CD8-positive, alpha-beta T cell (primary cell): ENCODE measurements at regions of chr3 and their contacts with region 1.

Region 1: DNA sequence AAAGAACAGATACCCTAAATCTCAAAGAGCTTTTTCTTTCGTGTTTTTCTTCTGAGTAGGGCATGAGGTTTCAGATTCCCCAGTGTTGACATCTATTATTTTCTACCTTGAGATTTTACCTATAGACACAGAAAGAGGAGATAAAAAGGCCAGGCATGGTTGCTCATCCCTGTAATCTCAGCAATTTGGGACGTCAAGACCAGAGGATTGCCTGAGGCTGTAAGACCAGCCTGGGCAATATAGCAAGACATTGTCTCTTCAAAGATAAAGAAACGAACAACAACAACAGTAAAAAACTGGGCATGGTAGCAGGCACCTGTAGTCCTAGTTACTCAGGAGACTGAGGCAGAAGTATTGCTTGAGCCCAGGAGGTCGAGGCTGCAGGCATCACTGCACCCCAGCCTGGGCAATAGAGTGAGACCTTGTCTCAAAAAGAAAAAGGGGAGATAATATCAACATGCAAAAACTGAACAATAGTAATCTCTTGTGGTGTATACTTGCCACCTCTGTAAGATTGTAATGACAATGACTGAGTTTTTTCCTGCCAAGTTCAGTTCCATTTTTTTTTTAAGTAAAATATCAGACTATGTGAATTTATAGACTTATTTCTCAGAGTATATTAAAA is 71.3 kb downstream of the MBNL1 start:
- DNase-seq: no peak
- ATAC-seq: no peak
- H3K4me3 ChIP-seq: no peak overlapping the region
- H3K4me3 Mint-ChIP-seq: no peak overlapping the region
- H3K27ac ChIP-seq: no peak overlapping the region
- H3K27ac Mint-ChIP-seq: peak overlapping the region; percentile 80
- H3K4me1 ChIP-seq: peaks cover 40% of the 10 kb centered on the region
- H3K4me1 Mint-ChIP-seq: peaks cover 76% of the 10 kb centered on the region
- H3K27me3 ChIP-seq: no peaks in the 10 kb centered on the region
- H3K27me3 Mint-ChIP-seq: no peaks in the 10 kb centered on the region
- CTCF ChIP-seq: no peak

Region 2: DNA sequence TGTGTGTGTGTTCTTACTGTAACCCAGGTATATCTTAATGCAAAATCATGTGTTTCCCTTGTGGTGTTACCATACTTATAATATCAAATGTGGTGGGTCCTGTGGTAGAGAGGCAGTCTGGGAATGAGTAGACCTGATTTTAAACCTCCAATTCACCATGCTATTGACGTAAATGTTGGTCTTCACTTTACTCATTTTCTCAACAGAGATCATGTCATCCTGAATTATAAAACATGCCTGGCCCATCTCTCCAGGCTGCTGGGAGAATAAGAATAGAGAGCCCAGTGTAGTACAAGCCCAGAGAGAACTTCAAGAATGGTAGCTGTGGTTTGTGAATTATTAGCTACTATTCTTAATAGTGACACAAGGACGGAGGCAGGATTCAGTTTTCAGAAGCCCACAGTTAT is 16.9 kb after region 1 on chr3:
- CTCF ChIA-PET with region 1: no interaction called
- POLR2A ChIA-PET with region 1: interaction called, 3 read pairs
- intact Hi-C with region 1: loop called in 1 of 2 experiments (anchors 2 kb)
- DNase-seq: peak in 1 of 9 experiments; percentile 29
- ATAC-seq: peak; percentile 47
- H3K4me3 ChIP-seq: no peak overlapping the region
- H3K4me3 Mint-ChIP-seq: no peak overlapping the region
- H3K27ac ChIP-seq: peak overlapping the region in 1 of 2 experiments; percentile 9
- H3K27ac Mint-ChIP-seq: peak overlapping the region; percentile 86
- H3K4me1 ChIP-seq: peaks cover 52% of the 10 kb centered on the region
- H3K4me1 Mint-ChIP-seq: peaks cover 78% of the 10 kb centered on the region
- H3K27me3 ChIP-seq: no peaks in the 10 kb centered on the region
- H3K27me3 Mint-ChIP-seq: no peaks in the 10 kb centered on the region
- CTCF ChIP-seq: no peak